ENCODE measurements at regions of chr17 and their contacts with region 1.

Region 1: GRCh38 chr17:76072148-76072858 is at the start of gene SRP68:
- DNase-seq: peak; percentile 90
- ATAC-seq: peak; percentile 79
- H3K4me3 Mint-ChIP-seq: peak within 1 kb of the TSS; percentile 94
- H3K27ac Mint-ChIP-seq: peak within 1 kb of the TSS; percentile 100
- H3K4me1 Mint-ChIP-seq: peaks cover 44% of the 10 kb centered on the region
- H3K27me3 Mint-ChIP-seq: peaks cover 28% of the 10 kb centered on the region
- total RNA-seq, gene SRP68: 151 to 174 TPM

Region 2: DNA sequence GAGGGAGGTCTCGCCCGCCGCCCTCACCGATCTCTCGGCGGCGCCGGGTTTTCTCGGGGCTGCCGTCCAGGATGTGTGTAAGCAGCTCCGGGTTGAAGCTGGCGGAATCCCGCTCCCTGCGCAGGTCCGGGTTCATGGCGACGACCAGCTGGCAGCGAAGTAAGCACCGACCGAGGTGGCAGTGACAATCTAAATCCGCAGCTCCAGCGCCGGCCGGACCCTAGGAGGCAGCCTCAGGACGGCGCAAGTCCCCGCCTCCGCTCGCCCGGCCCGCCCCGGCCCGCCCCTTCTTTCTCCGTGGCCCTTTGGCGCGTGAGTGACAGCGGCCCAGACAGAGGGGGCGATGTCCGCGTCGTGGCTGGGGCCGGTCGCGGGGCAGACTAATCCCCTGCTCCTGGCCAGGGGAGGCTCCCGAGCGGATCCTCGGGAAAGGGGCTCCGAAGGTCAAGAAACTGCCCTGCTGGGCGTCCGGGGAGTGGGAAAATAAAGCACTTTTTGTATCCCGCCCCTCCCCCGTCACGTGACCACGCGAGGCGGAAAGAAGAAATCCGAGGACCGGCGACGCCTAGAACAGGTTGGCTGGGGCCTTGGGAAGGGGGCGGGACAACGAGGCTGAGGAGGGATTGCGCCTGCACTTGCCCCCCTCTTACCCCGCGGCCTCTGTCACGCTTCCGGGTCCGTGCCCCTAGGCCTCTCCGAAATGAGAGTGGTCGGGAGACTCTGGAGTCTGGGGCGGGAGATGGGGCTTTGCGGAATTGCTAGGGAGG is 93.2 kb before region 1 on chr17 and contains the starts of genes ACOX1 and TEN1:
- CTCF ChIA-PET with region 1: no interaction called
- POLR2A ChIA-PET with region 1: no interaction called
- intact Hi-C with region 1: loop called in 1 of 2 experiments (anchors 1 kb)
- DNase-seq: peak; percentile 98
- ATAC-seq: peak; percentile 96
- H3K4me3 Mint-ChIP-seq: peak within 1 kb of the TSS; percentile 89
- H3K27ac Mint-ChIP-seq: peak within 1 kb of the TSS; percentile 94
- H3K4me1 Mint-ChIP-seq: peaks cover 30% of the 10 kb centered on the region
- H3K27me3 Mint-ChIP-seq: no peaks in the 10 kb centered on the region
- total RNA-seq, gene ACOX1: 27.7 to 33.1 TPM
- total RNA-seq, gene TEN1: 9.8 to 13.6 TPM

Region 3: GRCh38 chr17:76103274-76104139 is 31.2 kb after region 1 on chr17 and contains the start of gene EXOC7:
- CTCF ChIA-PET with region 1: no interaction called
- POLR2A ChIA-PET with region 1: no interaction called
- intact Hi-C with region 1: loop called in 1 of 2 experiments (anchors 1 kb)
- DNase-seq: peak; percentile 96
- ATAC-seq: peak; percentile 94
- H3K4me3 Mint-ChIP-seq: peak within 1 kb of the TSS; percentile 90
- H3K27ac Mint-ChIP-seq: peak within 1 kb of the TSS; percentile 93
- H3K4me1 Mint-ChIP-seq: peaks cover 18% of the 10 kb centered on the region
- H3K27me3 Mint-ChIP-seq: no peaks in the 10 kb centered on the region
- total RNA-seq, gene EXOC7: 73.0 to 77.0 TPM

Region 4: GRCh38 chr17:76264755-76265596 is 192.7 kb after region 1 on chr17 and contains the start of gene UBALD2:
- CTCF ChIA-PET with region 1: no interaction called
- POLR2A ChIA-PET with region 1: interaction called, 19 read pairs
- intact Hi-C with region 1: loop called in 1 of 2 experiments (anchors 1 kb)
- DNase-seq: peak; percentile 99
- ATAC-seq: peak; percentile 81
- H3K4me3 Mint-ChIP-seq: peak within 1 kb of the TSS; percentile 96
- H3K27ac Mint-ChIP-seq: peak within 1 kb of the TSS; percentile 100
- H3K4me1 Mint-ChIP-seq: peaks cover 52% of the 10 kb centered on the region
- H3K27me3 Mint-ChIP-seq: no peaks in the 10 kb centered on the region
- total RNA-seq, gene UBALD2: 299 to 639 TPM

Region 5: DNA sequence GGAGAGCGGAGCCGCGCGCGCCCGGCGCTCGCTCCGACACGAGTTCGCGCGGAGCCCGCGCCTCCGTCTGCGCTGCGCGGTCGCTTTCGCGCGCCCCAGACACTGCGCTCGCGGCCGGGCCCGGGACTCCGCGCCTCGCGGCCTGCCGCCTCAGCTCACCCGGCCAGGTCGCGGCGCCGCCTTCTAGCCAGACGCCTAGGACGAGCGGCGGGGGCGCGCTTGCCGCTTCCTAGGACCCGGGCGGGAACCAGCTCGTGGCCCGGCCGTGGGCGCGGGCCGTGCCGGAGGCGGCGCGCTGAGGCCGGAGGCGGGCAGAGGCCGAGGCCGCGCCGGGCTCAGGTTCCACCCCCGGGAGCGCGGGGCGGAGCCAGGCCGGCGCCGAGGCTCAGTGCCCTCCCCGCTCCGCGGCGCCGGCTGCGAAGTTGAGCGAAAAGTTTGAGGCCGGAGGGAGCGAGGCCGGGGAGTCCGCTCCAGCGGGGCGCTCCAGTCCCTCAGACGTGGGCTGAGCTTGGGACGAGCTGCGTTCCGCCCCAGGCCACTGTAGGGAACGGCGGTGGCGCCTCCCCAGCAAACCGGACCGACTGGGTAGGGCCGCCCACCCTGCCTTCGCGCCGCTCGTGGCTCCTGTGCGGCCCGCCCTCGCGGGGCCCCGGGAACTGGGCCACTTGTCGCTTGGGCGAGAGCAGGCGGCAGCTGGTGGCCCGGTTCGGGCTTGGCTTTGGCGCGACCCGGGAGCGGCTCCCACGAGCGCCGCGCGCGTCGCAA is 312.1 kb after region 1 on chr17 and contains the start of gene SPHK1:
- CTCF ChIA-PET with region 1: interaction called, 3 read pairs
- POLR2A ChIA-PET with region 1: no interaction called
- intact Hi-C with region 1: loop called in 1 of 2 experiments (anchors 1 kb)
- DNase-seq: peak; percentile 86
- ATAC-seq: peak; percentile 72
- H3K4me3 Mint-ChIP-seq: peak within 1 kb of the TSS; percentile 85
- H3K27ac Mint-ChIP-seq: peak within 1 kb of the TSS; percentile 81
- H3K4me1 Mint-ChIP-seq: peaks cover 12% of the 10 kb centered on the region
- H3K27me3 Mint-ChIP-seq: no peaks in the 10 kb centered on the region
- total RNA-seq, gene SPHK1: 7.4 to 11.7 TPM